Transverse colon (tissue), 4 donors: ENCODE measurements at regions of chr5 and their contacts with region 1.

Region 1: DNA sequence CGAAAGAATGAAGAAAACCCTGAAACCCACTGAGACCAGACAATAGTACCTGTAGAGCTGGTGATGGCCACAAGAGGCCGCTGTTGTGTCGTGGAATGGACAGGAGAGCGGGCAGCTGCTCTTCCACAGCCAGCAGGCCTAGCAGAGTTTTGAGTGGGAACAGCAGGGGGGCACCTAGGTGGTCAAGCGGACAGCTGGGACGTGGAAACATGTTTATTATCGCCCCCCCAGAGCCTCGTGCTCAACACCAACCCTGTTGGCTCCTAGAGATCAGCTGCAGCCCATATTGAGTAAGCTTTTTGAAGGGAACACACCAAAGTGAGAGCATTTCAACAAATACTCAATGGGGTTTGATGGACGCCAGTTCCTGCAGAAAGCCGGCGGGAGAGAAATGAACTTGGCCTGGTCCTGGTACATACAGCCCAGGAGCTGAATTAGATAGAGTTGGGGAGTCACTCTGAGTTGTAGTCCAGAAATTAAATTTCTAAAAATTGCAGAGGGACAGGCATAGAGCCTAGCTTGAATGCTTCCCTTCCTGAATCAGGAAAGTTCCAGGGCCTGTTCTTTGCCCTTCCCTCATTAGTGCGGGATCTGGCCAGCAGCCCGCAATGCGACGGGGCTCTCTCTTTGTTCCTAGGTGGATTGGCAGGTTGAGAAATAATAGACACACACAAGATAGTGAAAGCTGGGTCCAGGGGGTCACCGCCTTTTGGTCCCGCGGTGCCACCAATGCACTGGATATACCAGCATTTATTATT is 33.8 kb downstream of the MFAP3 start:
- DNase-seq: peak; percentile 87
- H3K4me3 ChIP-seq: no peak overlapping the region
- H3K27ac ChIP-seq: no peak overlapping the region
- H3K4me1 ChIP-seq: peaks cover 0 to 10% (median 1%) of the 10 kb centered on the region in 4 donors
- H3K27me3 ChIP-seq: no peaks in the 10 kb centered on the region
- CTCF ChIP-seq: peak; percentile 91 to 94 (median 92)
- EP300 ChIP-seq: no peak
- POLR2A ChIP-seq: no peak

Region 2: GRCh38 chr5:153974131-153974812 is 98.3 kb before region 1 on chr5:
- in situ Hi-C with region 1: no loop called
- intact Hi-C with region 1: no loop called
- DNase-seq: peak; percentile 19
- H3K4me3 ChIP-seq: no peak overlapping the region
- H3K27ac ChIP-seq: no peak overlapping the region
- H3K4me1 ChIP-seq: no peaks in the 10 kb centered on the region
- H3K27me3 ChIP-seq: no peaks in the 10 kb centered on the region
- CTCF ChIP-seq: peak; percentile 52 to 66 (median 62)
- EP300 ChIP-seq: no peak
- POLR2A ChIP-seq: no peak

Region 3: GRCh38 chr5:154179846-154180710 is 107.5 kb after region 1 on chr5:
- in situ Hi-C with region 1: loop called in 1 of 4 experiments (anchors 10 kb)
- intact Hi-C with region 1: loop called (anchors 5 kb)
- DNase-seq: no peak
- H3K4me3 ChIP-seq: no peak overlapping the region
- H3K27ac ChIP-seq: peak overlapping the region in 2 of 4 donors; percentile 30 to 62
- H3K4me1 ChIP-seq: peaks cover 0 to 14% (median 3%) of the 10 kb centered on the region in 4 donors
- H3K27me3 ChIP-seq: no peaks in the 10 kb centered on the region
- CTCF ChIP-seq: peak; percentile 68 to 79 (median 75)
- EP300 ChIP-seq: no peak
- POLR2A ChIP-seq: no peak

Region 4: DNA sequence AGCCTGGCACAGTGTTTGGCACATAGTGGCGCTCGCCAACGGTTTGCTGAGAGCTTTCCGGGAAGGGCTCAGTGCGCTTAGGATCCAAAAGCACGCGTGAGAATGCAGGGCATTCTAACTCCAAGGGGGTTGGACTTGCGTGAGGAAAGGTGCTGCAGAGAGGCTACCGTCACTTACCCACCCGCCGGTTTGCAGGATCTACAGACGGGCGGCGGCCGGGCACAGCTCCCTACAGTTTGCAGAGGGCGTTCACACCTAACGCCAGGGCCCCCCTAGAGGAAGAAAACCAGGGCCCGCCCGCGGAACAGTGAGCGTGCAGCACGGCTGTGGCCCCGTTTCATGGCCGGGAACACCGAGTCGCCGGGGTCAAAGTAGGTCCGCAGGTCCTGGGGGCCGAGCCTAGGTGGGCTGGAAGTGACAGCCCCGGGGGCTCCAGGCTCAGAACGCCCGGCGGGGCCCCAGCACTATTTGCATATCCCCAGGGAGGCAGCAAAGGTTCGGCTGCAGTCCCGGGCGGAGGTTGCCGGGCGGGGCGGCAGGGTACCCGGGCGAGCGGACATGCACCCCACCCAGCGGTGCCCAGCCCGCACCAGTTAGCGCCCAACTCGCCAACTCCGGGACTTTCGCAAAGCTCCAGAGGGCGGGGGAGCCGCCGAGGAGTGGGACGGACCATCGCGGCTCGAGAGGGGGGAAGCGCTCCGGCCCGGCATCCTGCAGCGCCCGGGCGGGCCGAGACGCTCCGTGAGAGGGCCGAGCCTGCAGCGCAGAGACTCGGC is 117.4 kb after region 1 on chr5:
- in situ Hi-C with region 1: loop called in 1 of 4 experiments (anchors 10 kb)
- intact Hi-C with region 1: no loop called
- DNase-seq: peak; percentile 90
- H3K4me3 ChIP-seq: peak overlapping the region; percentile 59 to 82 (median 72)
- H3K27ac ChIP-seq: peak overlapping the region; percentile 85 to 96 (median 90)
- H3K4me1 ChIP-seq: peaks cover 6 to 39% (median 22%) of the 10 kb centered on the region in 4 donors
- H3K27me3 ChIP-seq: no peaks in the 10 kb centered on the region
- CTCF ChIP-seq: peak; percentile 33 to 79 (median 49)
- EP300 ChIP-seq: no peak
- POLR2A ChIP-seq: peak; percentile 50

Region 5: GRCh38 chr5:154200221-154200620 is 127.6 kb after region 1 on chr5:
- in situ Hi-C with region 1: no loop called
- intact Hi-C with region 1: no loop called
- DNase-seq: no peak
- H3K4me3 ChIP-seq: no peak overlapping the region
- H3K27ac ChIP-seq: no peak overlapping the region
- H3K4me1 ChIP-seq: peaks cover 15 to 44% (median 23%) of the 10 kb centered on the region in 4 donors
- H3K27me3 ChIP-seq: no peaks in the 10 kb centered on the region
- CTCF ChIP-seq: no peak
- EP300 ChIP-seq: no peak
- POLR2A ChIP-seq: no peak

Region 6: DNA sequence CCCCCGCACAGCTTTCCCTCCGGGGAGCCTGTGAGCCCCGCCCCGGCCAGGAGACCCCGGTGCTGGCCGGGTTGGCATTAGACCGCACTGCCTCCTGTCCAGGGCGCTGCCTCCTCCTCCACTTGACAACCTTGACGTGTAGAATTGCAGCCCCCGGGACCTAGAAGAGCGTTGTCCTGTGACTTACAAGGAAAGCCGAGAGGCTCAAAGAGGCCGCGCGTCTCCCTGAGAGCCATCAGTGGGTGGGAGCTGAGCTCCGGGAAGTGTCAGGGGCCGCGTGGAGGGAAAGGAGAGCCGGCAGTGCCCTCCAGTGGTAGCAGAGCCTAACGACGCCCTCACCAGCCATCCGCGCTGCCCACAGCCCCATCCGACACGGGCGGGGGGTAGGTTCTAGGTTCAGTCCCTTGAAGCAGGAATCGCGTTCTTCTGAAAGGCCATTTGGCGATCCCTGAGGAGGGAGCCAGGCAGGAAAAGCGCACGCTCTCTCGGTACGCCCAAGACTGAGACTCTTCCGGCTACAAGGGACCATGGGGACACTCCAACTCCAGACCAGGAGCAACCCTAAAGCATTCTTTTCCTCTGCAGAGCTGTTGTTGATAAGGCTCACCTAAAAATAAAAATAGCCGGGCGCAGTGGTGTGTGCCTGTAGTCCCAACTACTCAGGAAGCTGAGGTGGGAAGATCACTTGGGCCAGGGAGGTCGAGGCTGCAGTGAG is 332.6 kb after region 1 on chr5:
- in situ Hi-C with region 1: loop called (anchors 5 to 10 kb)
- intact Hi-C with region 1: loop called (anchors 5 kb)
- DNase-seq: peak; percentile 83
- H3K4me3 ChIP-seq: peak overlapping the region in 3 of 4 donors; percentile 10 to 38 (median 11)
- H3K27ac ChIP-seq: no peak overlapping the region
- H3K4me1 ChIP-seq: peaks cover 4 to 10% (median 9%) of the 10 kb centered on the region in 4 donors
- H3K27me3 ChIP-seq: no peaks in the 10 kb centered on the region
- CTCF ChIP-seq: peak; percentile 78 to 88 (median 83)
- EP300 ChIP-seq: no peak
- POLR2A ChIP-seq: no peak

Region 7: DNA sequence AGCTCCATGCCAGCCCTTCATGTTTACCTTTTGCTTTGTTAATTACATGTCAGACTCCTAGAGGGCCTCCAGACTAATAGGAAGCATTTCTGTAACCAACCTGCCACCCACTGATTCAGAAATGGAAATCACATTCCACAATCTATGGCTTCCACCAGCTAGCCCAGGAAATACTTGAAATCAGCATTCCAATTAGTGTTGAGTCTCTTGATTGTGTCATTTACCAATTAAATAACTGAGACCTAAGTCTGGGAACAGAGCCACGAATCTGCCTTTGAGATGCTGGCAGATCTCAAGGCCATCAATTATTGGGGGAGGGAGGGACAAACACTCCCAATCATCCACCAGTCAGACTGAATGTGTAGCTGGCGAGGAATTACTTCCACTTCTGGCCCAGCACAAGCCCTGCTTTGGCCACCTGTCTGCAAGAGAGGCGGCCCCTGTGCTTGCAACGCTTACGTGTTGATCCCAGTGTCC is 345.8 kb after region 1 on chr5:
- in situ Hi-C with region 1: loop called in 2 of 4 experiments (anchors 10 kb)
- intact Hi-C with region 1: no loop called
- DNase-seq: no peak
- H3K4me3 ChIP-seq: no peak overlapping the region
- H3K27ac ChIP-seq: no peak overlapping the region
- H3K4me1 ChIP-seq: no peaks in the 10 kb centered on the region
- H3K27me3 ChIP-seq: no peaks in the 10 kb centered on the region
- CTCF ChIP-seq: no peak
- EP300 ChIP-seq: no peak
- POLR2A ChIP-seq: no peak